Heart right ventricle (tissue), 16 donors: ENCODE measurements at regions of chrX and their contacts with region 1.

Region 1: DNA sequence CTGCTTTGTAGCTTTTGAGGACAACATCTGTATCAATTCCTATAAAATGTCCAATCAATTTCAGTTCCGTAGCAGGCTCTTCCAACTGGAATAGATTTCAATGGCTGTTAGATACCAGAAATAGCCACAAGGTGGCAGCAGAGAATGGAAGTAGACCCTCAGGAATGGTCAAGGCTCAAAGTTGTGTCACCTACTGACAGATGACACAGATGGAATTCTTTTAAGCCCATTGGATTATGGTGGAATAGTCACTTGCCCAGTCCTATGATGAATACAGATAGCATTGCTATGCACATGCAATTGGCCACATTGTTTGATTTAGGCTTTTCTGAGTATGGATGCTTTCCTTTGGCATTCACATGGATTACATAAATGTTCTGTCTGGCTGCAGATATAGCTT is 130.4 kb upstream of the RADX start:
- DNase-seq: peak in 1 of 2 donors; percentile 17
- ATAC-seq: peak in 5 of 8 donors; percentile 29 to 71 (median 59)
- H3K4me3 ChIP-seq: no peak overlapping the region
- H3K27ac ChIP-seq: no peak overlapping the region
- H3K4me1 ChIP-seq: no peaks in the 10 kb centered on the region
- H3K27me3 ChIP-seq: peaks cover 0 to 7% (median 0%) of the 10 kb centered on the region in 7 donors
- CTCF ChIP-seq: peak; percentile 42 to 89 (median 64)

Region 2: DNA sequence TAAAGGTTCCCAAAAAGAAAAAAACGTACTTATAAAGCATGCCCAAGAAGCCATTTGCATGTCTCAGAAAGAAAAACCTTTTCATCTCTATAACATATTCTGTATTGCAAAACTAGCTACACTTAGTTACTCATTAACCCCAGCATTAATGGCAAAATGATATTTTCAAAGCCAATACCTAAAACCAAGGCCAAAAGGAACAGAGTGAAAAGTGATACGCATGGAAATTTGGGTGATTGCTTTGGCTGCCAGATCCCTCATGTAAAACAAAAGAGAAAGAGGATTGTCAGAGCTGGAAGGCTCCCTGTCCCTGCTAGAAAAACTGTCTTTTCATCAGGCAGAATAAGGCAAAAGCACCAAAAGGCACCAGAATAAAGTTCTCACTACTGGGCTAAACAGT is 83.6 kb after region 1 on chrX:
- intact Hi-C with region 1: no loop called
- DNase-seq: no peak
- ATAC-seq: no peak
- H3K4me3 ChIP-seq: no peak overlapping the region
- H3K27ac ChIP-seq: no peak overlapping the region
- H3K4me1 ChIP-seq: no peaks in the 10 kb centered on the region
- H3K27me3 ChIP-seq: peaks cover 0 to 29% (median 0%) of the 10 kb centered on the region in 7 donors
- CTCF ChIP-seq: no peak

Region 3: DNA sequence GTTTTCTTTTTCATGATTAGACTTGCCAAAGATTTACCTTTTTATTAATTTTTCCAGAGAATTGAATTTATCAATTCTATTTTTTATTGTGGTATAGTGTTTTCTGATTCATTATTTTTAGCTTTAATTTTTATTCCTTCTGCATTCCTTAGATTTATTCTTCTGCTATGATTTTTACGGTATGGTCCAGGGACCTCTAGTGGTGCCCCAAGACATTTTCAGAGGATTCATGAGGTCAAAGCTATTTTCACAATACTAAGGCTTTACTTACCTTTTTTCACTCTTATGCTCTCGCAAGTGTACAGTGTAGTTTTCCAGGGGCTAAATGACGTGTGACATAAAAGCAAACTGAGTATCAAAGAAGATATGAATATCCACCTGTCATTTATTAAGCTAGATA is 138.5 kb after region 1 on chrX:
- intact Hi-C with region 1: no loop called
- DNase-seq: no peak
- ATAC-seq: no peak
- H3K4me3 ChIP-seq: no peak overlapping the region
- H3K27ac ChIP-seq: no peak overlapping the region
- H3K4me1 ChIP-seq: no peaks in the 10 kb centered on the region
- H3K27me3 ChIP-seq: peaks cover 0 to 27% (median 0%) of the 10 kb centered on the region in 7 donors
- CTCF ChIP-seq: peak in 5 of 9 donors; percentile 25 to 30 (median 28)

Region 4: GRCh38 chrX:106791495-106791894 is 310.2 kb after region 1 on chrX:
- intact Hi-C with region 1: loop called in 8 of 10 experiments (anchors 2 to 10 kb)
- DNase-seq: no peak
- ATAC-seq: no peak
- H3K4me3 ChIP-seq: no peak overlapping the region
- H3K27ac ChIP-seq: no peak overlapping the region
- H3K4me1 ChIP-seq: no peaks in the 10 kb centered on the region
- H3K27me3 ChIP-seq: peaks cover 0 to 54% (median 0%) of the 10 kb centered on the region in 7 donors
- CTCF ChIP-seq: peak in 7 of 9 donors; percentile 18 to 44 (median 35)